Caco-2 (cell line): ENCODE measurements at regions of chr2 and their contacts with region 1.

Region 1: DNA sequence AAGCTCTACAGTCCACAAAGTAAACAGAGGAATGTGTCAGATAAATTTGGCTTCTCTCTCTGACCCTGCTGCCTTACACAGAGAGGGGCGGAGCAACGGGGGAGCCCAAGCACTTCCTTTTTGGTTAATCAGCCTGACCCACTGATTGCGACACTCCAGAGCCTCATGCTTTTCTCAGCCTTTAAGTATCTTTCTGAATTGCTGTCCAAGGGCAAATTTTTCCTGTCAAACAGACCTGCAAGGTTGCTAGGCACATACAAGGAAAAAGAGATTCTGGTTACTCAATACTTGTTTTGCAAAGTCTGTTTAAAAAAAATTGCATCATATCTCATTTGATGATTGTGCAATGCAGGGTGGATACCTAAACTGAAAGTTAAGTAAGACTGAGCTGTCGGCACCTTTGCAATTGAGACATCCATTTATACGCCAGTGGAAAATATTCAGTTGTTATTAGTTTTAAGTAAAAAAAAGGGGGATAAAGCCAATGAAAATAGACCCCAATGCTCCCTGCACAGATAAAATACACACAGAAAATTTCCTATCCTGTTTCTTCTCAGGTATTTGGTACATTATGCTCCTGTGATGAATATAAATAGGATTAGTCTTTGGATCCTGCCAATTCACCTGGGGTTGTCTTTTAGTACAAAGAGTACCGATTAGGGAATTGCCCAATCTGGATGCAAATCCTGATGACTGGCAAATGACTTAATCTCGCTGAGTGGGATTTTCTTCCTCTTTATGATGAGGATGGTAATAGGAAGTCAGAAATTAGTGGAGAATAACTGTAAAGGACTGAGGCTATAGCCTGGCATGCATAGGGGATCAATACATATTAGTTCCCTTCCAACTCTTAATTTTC is 260.2 kb upstream of the TRIB2 start:
- DNase-seq: peak; percentile 89
- H3K4me3 ChIP-seq: no peak overlapping the region
- H3K4me3 Mint-ChIP-seq: peak overlapping the region; percentile 38
- H3K27ac Mint-ChIP-seq: peak overlapping the region; percentile 53
- H3K4me1 ChIP-seq: peaks cover 22% of the 10 kb centered on the region
- H3K4me1 Mint-ChIP-seq: peaks cover 23% of the 10 kb centered on the region
- H3K27me3 ChIP-seq: no peaks in the 10 kb centered on the region
- H3K27me3 Mint-ChIP-seq: no peaks in the 10 kb centered on the region
- CTCF ChIP-seq: no peak

Region 2: GRCh38 chr2:12389344-12390045 is 67.0 kb before region 1 on chr2:
- CTCF ChIA-PET with region 1: no interaction called
- POLR2A ChIA-PET with region 1: no interaction called
- intact Hi-C with region 1: no loop called
- DNase-seq: no peak
- H3K4me3 ChIP-seq: no peak overlapping the region
- H3K4me3 Mint-ChIP-seq: no peak overlapping the region
- H3K27ac Mint-ChIP-seq: no peak overlapping the region
- H3K4me1 ChIP-seq: peaks cover 6% of the 10 kb centered on the region; the same call in 1 of the 2 replicates
- H3K4me1 Mint-ChIP-seq: no peaks in the 10 kb centered on the region
- H3K27me3 ChIP-seq: no peaks in the 10 kb centered on the region
- H3K27me3 Mint-ChIP-seq: peaks cover 6% of the 10 kb centered on the region
- CTCF ChIP-seq: no peak

Region 3: DNA sequence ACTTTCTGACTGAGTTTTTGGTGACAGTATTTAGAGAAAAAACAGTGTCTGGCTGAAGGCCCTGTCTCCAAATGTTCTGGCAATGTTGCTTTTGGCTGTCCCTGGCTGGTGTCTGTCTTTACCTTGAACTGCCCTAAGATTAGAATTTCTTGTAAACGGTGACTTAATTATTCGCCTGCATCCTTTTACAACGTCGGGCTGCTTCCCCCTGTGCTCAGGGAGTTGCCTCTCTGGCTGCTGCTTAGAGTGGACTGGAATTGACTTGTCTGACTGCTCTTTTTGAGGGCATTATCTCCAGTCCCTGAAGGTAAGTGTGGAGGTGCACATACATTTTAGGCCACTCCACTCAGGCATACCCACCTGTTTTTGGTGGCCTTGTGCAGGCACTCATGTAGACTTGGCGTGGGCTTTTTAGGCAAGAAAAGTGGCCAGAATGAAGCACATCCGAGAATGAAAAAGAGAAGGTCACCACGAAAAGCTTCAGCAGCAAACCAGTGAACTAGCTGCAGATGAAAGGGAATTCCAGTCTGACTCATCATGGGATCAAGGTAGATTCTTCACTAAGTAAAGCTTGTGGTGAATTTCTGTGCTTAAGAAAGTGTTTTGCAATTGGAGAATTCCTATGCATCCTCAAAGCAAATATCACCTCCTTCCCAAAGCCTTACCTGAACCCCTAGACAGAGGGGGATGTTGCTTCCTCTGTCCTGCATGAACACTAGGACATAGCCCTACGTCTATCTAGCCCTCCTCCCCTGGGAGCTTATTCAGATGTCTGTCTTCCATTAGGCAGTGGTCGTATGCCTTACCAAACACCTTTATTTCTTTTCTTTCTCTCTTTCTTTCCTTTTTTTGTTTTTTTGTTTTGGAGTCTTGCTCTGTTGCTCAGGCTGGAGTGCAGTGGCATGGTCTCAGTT is 29.9 kb after region 1 on chr2:
- CTCF ChIA-PET with region 1: no interaction called
- POLR2A ChIA-PET with region 1: no interaction called
- intact Hi-C with region 1: loop called (anchors 1 kb)
- DNase-seq: peak in 1 of 2 experiments; percentile 47
- H3K4me3 ChIP-seq: no peak overlapping the region
- H3K4me3 Mint-ChIP-seq: no peak overlapping the region
- H3K27ac Mint-ChIP-seq: peak overlapping the region; percentile 60
- H3K4me1 ChIP-seq: peaks cover 24% of the 10 kb centered on the region
- H3K4me1 Mint-ChIP-seq: peaks cover 19% of the 10 kb centered on the region
- H3K27me3 ChIP-seq: no peaks in the 10 kb centered on the region
- H3K27me3 Mint-ChIP-seq: no peaks in the 10 kb centered on the region
- CTCF ChIP-seq: no peak

Region 4: DNA sequence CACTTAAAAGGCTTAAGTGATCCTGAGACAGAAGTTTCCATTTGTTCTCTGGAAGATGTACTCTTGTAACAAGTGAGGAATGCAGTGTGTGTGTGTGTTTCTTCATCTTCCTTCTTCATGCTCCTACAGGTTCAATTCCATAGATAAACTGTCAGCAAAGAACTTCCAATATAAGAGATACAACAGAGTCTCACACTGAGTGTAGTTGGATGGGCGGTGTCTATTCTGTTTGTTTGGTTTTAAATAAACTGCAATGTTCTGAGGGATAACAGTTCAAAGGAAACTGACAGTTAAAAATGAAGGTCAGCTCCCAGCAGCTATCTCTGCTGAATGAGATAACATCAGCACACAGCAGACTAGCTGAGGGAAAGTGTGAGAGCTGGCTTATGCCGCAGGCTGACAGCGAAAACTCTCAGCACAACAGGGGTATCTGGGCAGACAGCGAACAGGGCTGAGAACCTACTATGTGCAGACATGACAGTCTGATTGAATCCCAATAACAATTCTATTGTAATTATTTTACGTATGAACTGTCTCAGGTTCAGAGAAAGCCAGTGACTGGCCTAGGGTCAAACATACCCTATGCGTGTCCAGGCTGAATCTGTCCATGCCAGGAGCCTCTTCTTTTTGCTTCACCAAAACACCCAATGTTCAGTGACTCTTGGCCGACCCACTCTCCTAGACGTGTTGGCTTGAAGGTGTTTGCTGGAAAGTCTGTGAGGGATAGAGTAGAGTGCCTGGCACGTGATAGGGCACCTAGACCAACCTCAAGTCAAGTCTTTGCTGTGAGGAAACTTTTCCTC is 58.3 kb after region 1 on chr2:
- CTCF ChIA-PET with region 1: no interaction called
- POLR2A ChIA-PET with region 1: no interaction called
- intact Hi-C with region 1: loop called (anchors 1 kb)
- DNase-seq: peak; percentile 49 to 58
- H3K4me3 ChIP-seq: no peak overlapping the region
- H3K4me3 Mint-ChIP-seq: peak overlapping the region; percentile 20
- H3K27ac Mint-ChIP-seq: no peak overlapping the region
- H3K4me1 ChIP-seq: peaks cover 27% of the 10 kb centered on the region
- H3K4me1 Mint-ChIP-seq: peaks cover 25% of the 10 kb centered on the region
- H3K27me3 ChIP-seq: no peaks in the 10 kb centered on the region
- H3K27me3 Mint-ChIP-seq: peaks cover 5% of the 10 kb centered on the region
- CTCF ChIP-seq: no peak

Region 5: DNA sequence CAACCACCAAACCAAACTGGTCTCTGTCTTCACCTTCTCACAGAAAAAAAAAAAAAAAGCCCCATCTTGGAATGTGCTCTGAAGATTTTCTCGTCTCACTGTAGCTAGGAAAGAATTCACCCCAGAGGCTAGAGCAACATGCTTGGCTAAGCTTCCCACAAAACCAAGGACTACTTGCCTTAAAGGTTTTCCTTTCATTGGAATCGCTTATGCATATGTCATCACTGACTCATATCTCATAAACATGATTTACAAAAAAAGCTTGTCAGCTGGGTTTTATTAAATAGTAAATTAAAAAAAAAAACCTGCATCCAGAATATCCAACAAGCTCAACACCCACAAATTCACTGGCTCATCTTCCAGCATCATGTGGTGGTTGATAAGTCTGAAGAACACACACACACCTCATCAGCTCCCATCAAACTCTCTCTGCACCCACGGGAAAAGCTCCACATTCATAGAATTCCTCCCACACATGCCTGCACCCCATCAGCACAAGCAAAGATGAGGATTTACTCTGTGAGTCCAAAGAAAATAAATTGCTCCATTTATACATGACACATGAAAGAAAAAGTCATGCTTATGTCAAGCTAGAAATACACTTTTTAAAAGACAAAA is 78.2 kb after region 1 on chr2:
- CTCF ChIA-PET with region 1: no interaction called
- POLR2A ChIA-PET with region 1: no interaction called
- intact Hi-C with region 1: loop called (anchors 5 kb)
- DNase-seq: no peak
- H3K4me3 ChIP-seq: no peak overlapping the region
- H3K4me3 Mint-ChIP-seq: no peak overlapping the region
- H3K27ac Mint-ChIP-seq: peak overlapping the region; percentile 33
- H3K4me1 ChIP-seq: peaks cover 25% of the 10 kb centered on the region
- H3K4me1 Mint-ChIP-seq: peaks cover 37% of the 10 kb centered on the region
- H3K27me3 ChIP-seq: no peaks in the 10 kb centered on the region
- H3K27me3 Mint-ChIP-seq: no peaks in the 10 kb centered on the region
- CTCF ChIP-seq: no peak